Dendritic cell treated with granulocyte-macrophage colony-stimulating factor and Interleukin-4, amounts not matched to agents 40 ng/mL and 50 ng/mL, for 4 days (primary cell): ENCODE measurements at regions of chr2 and their contacts with region 1.

Region 1: DNA sequence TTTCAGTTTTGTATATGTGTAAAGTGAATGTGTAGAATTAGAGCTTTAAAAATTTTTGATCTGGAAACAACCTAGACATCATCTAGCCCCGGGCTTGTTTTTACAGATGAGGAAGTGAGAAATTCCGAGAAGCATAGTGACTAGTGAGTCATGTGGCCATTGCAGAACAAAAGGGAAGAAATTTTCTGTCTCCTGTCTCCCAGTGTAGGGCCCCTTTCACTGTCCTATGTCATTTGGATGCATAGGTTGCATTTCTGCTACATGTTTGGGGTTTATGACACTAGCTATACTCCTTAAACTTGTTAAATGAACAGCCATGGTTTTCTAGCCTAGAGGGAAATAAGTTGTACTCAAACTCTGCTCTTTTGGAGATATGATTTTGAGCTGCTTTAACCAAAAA is 84.6 kb downstream of the PLCL1 start:
- H3K4me3 Mint-ChIP-seq: no peak overlapping the region
- H3K27ac Mint-ChIP-seq: peak overlapping the region; percentile 91
- H3K4me1 Mint-ChIP-seq: peaks cover 35% of the 10 kb centered on the region
- H3K27me3 Mint-ChIP-seq: no peaks in the 10 kb centered on the region

Region 2: GRCh38 chr2:197838036-197838435 is 51.0 kb before region 1 on chr2:
- intact Hi-C with region 1: loop called (anchors 5 kb)
- H3K4me3 Mint-ChIP-seq: peak overlapping the region; percentile 54
- H3K27ac Mint-ChIP-seq: peak overlapping the region; percentile 81
- H3K4me1 Mint-ChIP-seq: peaks cover 6% of the 10 kb centered on the region
- H3K27me3 Mint-ChIP-seq: no peaks in the 10 kb centered on the region